ENCODE measurements at regions of chr3 and their contacts with region 1.

Region 1: DNA sequence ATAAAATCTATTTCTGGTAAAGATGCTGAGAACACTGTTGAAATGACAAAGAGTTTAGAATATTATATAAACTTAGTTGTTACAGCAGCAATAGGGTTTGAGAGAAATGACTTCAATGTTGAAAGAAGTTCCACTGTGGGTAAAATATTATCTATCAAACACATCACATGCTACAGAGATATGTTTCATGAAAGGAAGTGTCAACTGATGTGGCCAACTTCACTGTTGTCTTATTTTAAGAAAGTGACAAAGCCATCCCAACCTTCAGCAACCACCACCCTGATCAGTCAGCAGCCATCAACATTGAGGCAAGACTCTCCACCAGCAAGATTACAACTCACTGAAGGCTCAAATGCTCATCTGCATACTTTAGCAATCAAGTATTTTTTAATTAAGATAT is 20.2 kb downstream of the TMEM39A start:
- DNase-seq: no peak
- ATAC-seq: no peak
- H3K4me3 ChIP-seq: no peak overlapping the region
- H3K27ac ChIP-seq: no peak overlapping the region
- H3K4me1 ChIP-seq: no peaks in the 10 kb centered on the region
- H3K27me3 ChIP-seq: no peaks in the 10 kb centered on the region
- CTCF ChIP-seq: no peak
- EP300 ChIP-seq: no peak
- POLR2A ChIP-seq: no peak
- RAD21 ChIP-seq: no peak

Region 2: DNA sequence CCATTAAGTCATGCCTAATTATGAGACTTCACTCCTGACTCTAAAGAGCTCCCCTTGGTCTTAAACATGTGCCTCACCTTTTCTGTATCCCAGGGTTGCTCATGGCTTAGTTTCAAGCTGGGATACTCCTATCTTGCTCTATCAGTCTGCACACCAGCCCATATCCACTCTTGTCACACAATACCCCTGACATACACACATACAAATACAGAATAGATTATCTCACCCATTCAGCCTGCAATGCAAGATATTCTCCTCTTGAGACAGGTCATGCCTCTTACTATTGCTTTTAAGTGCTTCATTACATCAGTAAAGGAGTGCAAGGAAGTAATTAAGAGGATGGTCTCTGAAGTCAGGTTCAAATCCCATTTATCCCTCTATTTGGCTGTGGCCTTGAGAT is 995.8 kb before region 1 on chr3:
- CTCF ChIA-PET with region 1: no interaction called
- POLR2A ChIA-PET with region 1: no interaction called
- RAD21 ChIA-PET with region 1: no interaction called
- SMC1A ChIA-PET with region 1: no interaction called
- in situ Hi-C with region 1: no loop called
- intact Hi-C with region 1: no loop called
- DNase-seq: no peak
- ATAC-seq: no peak
- H3K4me3 ChIP-seq: no peak overlapping the region
- H3K27ac ChIP-seq: no peak overlapping the region
- H3K4me1 ChIP-seq: no peaks in the 10 kb centered on the region
- H3K27me3 ChIP-seq: no peaks in the 10 kb centered on the region
- CTCF ChIP-seq: no peak
- EP300 ChIP-seq: no peak
- POLR2A ChIP-seq: no peak
- RAD21 ChIP-seq: no peak

Region 3: GRCh38 chr3:119331661-119332060 is 111.5 kb before region 1 on chr3:
- CTCF ChIA-PET with region 1: no interaction called
- POLR2A ChIA-PET with region 1: no interaction called
- RAD21 ChIA-PET with region 1: no interaction called
- SMC1A ChIA-PET with region 1: no interaction called
- in situ Hi-C with region 1: no loop called
- intact Hi-C with region 1: no loop called
- DNase-seq: no peak
- ATAC-seq: no peak
- H3K4me3 ChIP-seq: no peak overlapping the region
- H3K27ac ChIP-seq: no peak overlapping the region
- H3K4me1 ChIP-seq: peaks cover 12% of the 10 kb centered on the region
- H3K27me3 ChIP-seq: no peaks in the 10 kb centered on the region
- CTCF ChIP-seq: no peak
- EP300 ChIP-seq: no peak
- POLR2A ChIP-seq: no peak
- RAD21 ChIP-seq: no peak

Region 4: DNA sequence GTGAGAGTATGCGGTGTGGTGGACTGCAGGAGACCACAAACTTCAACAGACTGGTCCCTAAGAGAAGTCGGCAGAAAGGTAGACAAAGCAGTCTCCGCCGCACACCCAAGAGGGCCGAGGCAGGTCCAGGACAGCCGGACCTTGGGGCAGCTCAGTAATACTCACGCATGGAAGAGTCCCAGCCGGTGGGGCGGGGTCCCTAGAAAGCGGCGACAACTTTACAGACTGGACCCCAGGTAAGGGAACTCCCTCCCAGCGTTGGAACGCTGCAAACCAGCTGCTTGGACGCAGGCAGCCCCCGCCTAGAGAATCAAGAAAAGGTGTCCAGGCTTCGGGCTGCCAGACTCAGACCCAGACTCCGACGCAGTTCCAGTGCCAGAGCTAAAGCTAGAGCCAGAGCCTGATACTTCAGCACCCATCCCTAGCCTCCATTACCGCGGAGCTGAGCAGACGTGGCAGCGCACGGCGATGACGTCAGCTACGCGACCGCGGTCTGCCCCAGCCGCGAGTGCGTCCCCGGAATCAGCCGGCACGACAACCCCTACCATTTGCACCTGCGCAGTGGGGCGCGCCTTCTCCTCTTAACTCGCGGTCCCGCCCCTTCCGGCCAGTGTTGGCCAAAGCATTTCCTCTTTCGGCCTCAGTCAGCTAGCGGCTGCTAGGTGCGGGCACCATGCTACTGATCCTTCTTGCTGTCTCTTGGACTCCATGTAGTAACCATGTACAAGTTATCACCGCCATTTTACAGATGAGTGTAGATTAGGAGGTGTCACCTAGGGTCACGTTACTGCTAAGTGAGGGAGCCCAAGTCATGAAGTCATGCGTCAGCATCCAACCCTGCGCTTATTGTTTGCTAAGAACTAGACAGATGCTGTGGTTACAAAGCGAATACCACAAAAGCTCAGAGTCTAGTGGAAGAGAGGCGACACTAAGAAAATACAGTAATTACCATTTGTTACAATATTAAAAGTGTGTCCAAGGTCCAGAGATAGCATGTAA is 20.3 kb after region 1 on chr3 and contains the start of gene TMEM39A:
- CTCF ChIA-PET with region 1: interaction called, 3 read pairs
- POLR2A ChIA-PET with region 1: interaction called, 15 read pairs
- RAD21 ChIA-PET with region 1: no interaction called
- SMC1A ChIA-PET with region 1: interaction called, 22 read pairs
- in situ Hi-C with region 1: no loop called
- intact Hi-C with region 1: no loop called
- DNase-seq: peak; percentile 96
- ATAC-seq: peak; percentile 93
- H3K4me3 ChIP-seq: peak within 1 kb of the TSS; percentile 97
- H3K27ac ChIP-seq: peak within 1 kb of the TSS; percentile 90
- H3K4me1 ChIP-seq: peaks cover 9% of the 10 kb centered on the region
- H3K27me3 ChIP-seq: no peaks in the 10 kb centered on the region
- CTCF ChIP-seq: no peak
- EP300 ChIP-seq: peak; percentile 10 to 83; a peak in 2 of 4 replicates
- POLR2A ChIP-seq: peak; percentile 96
- RAD21 ChIP-seq: no peak
- polyA plus RNA-seq, gene TMEM39A: 10.8 to 21.2 TPM